ENCODE measurements at regions of chr9 and their contacts with region 1.

Region 1: DNA sequence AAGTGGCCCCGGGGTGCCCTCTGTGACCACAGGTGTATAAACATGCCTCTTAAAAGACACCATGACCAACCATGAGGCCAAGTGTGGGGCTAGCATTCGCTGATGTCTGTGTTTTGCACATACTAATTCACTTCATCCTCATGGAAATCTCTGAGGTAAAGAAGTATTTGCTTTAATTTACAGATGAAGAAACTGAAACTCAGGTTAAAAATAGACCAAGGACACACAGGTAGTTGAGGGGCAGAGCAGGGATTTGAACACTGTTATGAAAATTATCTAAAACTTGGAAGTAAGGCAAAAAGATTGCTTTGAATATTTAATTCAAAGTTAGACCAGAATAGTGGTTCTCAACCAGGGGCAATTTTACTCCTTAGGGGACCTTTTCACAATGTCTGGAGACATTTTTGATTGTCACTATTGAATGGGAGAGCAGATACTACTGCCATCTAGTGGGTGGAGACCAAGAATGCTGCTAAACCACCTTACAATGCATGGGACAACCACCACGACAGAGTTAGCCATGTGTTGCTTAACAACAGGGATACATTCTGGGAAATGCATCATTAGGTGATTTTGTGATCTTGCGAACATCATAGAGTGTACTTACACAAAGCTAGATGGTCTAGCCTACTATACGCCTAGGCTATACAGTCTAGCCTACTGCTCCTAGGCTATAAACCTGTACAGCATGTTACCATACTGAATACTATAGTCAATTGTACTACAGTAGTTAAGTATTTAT is 8.0 kb upstream of the FXN start:
- DNase-seq: no peak
- ATAC-seq: peak; percentile 76

Region 2: GRCh38 chr9:68584189-68585033 is 443.1 kb before region 1 on chr9:
- intact Hi-C with region 1: loop called (anchors 1 kb)
- DNase-seq: peak; percentile 90
- ATAC-seq: peak; percentile 97

Region 3: GRCh38 chr9:68694125-68694524 is 333.4 kb before region 1 on chr9:
- intact Hi-C with region 1: no loop called
- DNase-seq: no peak
- ATAC-seq: no peak

Region 4: GRCh38 chr9:68895741-68896478 is 131.6 kb before region 1 on chr9:
- intact Hi-C with region 1: no loop called
- DNase-seq: no peak
- ATAC-seq: peak; percentile 47